Mucosa of descending colon (tissue), 3 donors: ENCODE measurements at regions of chr1 and their contacts with region 1.

Region 1: DNA sequence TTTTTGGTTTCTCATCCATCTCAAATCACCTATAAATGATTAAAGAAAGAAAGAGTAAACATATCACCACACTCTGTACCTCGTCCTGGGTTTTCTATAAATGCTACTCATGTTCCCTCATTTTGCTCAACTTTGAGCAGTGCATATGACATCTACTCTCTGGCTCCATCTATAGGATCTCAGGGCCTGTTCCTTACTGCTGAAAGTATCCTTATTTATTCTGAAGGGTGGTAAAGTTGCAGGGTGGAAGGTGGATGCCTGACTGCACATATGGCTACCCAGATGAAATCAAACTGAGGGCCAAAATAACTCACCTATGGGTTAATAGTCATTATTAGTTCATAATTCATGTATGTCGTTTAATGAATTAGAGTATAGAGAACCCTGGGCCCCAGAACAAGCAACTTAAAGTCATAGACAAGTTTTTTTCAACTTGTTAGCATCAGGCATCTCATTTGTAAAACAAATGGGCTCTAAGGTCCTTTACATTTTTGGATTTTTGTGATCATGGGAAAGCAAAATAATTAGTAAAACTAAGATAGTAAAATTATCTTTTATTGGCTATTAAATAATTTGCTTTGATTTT is 46.5 kb downstream of the NCF2 start:
- DNase-seq: peak in 1 of 3 donors; percentile 59
- ATAC-seq: peak; percentile 92
- H3K4me3 ChIP-seq: no peak overlapping the region
- H3K4me1 ChIP-seq: peaks cover 3% of the 10 kb centered on the region
- CTCF ChIP-seq: no peak

Region 2: DNA sequence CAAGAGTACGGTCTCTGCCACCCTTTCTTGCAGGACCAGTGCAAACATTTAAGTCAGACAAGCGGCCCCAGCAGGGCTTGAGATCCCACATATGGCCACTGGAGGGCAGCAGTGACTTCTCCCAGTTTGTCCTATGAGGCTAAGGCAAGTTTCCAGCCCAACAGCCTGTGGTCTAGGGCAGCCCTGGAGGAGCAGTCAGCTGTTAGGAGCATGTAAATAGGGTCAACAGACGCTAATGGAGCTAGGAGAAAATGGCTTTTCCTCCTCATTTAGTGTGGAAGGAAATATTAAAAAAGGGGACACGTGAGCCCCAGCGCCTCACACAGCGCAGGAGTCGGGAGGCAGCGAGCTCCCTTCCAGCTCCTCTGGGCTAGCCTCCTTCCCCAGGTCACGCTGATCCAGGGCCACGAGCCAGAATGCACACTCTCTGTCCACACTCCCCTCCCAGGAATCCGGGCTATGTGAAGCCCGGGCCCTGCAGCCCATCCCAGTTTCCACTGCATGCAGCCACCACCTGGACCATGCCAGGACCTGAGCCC is 262.1 kb before region 1 on chr1:
- intact Hi-C with region 1: loop called in 1 of 2 experiments (anchors 5 kb)
- DNase-seq: peak; percentile 81 to 93 (median 88)
- ATAC-seq: peak; percentile 93
- H3K4me3 ChIP-seq: no peak overlapping the region
- H3K4me1 ChIP-seq: no peaks in the 10 kb centered on the region
- CTCF ChIP-seq: peak; percentile 90

Region 3: DNA sequence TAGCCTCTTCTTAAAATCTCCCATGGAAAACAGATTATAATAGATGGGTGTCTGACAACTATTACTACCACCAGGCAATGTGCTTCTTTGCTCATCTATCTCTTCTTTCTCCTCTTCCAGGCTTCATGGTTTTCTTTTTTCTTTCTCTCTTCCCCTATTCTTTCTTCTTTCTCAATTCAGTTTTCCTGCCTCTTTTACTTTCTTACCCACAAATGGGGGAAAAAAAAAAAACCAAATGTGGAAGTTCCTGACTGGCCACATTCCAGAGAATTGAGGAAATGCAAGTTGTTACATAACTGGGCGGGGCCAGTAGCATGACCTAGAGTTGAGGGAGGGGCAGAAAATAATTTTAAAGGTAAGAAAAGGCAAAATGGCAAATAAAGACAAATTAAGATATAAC is 82.4 kb before region 1 on chr1:
- intact Hi-C with region 1: loop called in 1 of 2 experiments (anchors 10 kb)
- DNase-seq: peak in 1 of 3 donors; percentile 55
- ATAC-seq: peak; percentile 68
- H3K4me3 ChIP-seq: no peak overlapping the region
- H3K4me1 ChIP-seq: no peaks in the 10 kb centered on the region
- CTCF ChIP-seq: no peak

Region 4: GRCh38 chr1:183471743-183472487 is 71.8 kb before region 1 on chr1:
- intact Hi-C with region 1: loop called (anchors 10 kb)
- DNase-seq: peak; percentile 97 to 98 (median 98)
- ATAC-seq: peak; percentile 77
- H3K4me3 ChIP-seq: peak overlapping the region; percentile 98
- H3K4me1 ChIP-seq: peaks cover 21% of the 10 kb centered on the region
- CTCF ChIP-seq: no peak